BJ (cell line): ENCODE measurements at regions of chr22 and their contacts with region 1.

Region 1: GRCh38 chr22:37193629-37194191 is 5.7 kb upstream of the C1QTNF6 start:
- DNase-seq: no peak
- H3K4me3 ChIP-seq: no peak overlapping the region
- H3K27me3 ChIP-seq: no peaks in the 10 kb centered on the region
- CTCF ChIP-seq: no peak

Region 2: DNA sequence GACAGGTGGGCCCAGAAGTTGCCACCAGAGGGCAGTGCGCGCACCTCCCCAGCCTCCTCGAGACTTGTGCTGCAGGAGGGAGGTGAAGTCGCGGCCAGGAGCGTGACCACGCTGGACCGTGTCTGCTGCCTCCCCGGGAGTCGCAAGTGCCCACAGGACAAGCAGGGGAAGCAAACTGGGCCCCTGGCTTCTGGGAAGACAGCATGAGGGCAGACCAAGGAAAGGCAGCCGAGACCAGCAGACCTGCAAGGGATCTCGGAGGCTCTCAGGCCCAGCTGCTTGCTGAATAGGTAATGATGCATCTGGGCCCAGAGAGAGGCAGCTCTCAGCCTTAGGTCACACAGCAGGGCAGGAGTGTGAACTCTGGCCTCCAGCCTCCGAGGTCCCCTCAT is 27.0 kb before region 1 on chr22:
- CTCF ChIA-PET with region 1: interaction called, 161 read pairs
- POLR2A ChIA-PET with region 1: interaction called, 4 read pairs
- DNase-seq: no peak
- H3K4me3 ChIP-seq: no peak overlapping the region
- H3K27me3 ChIP-seq: peaks cover 8% of the 10 kb centered on the region
- CTCF ChIP-seq: peak; percentile 90